ENCODE measurements at regions of chr3 and their contacts with region 1.

Region 1: DNA sequence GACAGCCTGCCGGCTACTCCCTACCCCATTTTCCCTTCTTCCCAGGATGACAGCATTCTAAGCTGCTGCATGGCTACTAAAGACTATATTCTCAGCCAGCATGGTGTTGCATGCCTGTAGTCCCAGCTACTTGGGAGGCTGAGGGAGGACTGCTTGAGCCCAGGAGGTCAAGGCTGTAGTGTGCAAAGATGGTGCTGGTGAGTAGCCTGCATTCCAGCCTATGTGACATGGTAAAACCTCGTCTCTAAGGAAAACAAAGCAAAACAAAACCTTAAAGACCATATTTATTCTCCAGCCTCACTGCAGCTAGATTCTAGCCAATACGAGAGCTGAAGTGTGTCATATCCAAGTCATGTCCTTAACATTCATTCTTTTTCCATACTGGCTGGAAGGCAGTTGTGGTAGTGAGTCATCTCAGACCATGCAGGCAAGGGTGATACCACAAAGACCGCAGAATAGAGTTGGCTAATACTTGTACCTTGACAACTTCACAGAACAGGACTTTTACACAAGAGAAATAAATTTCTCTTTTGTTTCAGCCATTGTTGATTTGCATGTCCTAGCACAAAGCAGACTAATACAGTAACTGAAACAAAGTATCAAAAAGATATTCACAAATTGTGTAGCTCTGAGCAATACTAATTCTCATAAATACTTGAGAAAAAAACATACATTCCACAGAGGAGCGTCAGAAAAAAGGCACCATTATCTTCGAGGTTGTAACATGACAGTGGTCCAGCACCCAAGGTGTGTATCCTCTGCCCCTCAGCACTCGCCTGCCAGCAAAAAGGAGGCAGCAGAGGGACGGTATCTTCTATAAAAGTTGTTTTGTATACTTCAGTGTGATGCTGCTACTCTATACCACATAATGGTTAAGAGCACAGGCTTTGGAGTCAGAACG is 14.8 kb downstream of the PBRM1 start:
- DNase-seq: peak in 4 of 14 experiments; percentile 12 to 72 (median 52)
- ATAC-seq: peak; percentile 66
- H3K4me3 ChIP-seq: no peak overlapping the region
- H3K4me3 Mint-ChIP-seq: no peak overlapping the region
- H3K27ac ChIP-seq: peak overlapping the region in 1 of 2 donors; percentile 9
- H3K27ac Mint-ChIP-seq: peak overlapping the region; percentile 71
- H3K4me1 ChIP-seq: peaks cover 9% of the 10 kb centered on the region
- H3K4me1 Mint-ChIP-seq: peaks cover 35% of the 10 kb centered on the region
- H3K27me3 ChIP-seq: no peaks in the 10 kb centered on the region
- H3K27me3 Mint-ChIP-seq: no peaks in the 10 kb centered on the region
- CTCF ChIP-seq: no peak

Region 2: DNA sequence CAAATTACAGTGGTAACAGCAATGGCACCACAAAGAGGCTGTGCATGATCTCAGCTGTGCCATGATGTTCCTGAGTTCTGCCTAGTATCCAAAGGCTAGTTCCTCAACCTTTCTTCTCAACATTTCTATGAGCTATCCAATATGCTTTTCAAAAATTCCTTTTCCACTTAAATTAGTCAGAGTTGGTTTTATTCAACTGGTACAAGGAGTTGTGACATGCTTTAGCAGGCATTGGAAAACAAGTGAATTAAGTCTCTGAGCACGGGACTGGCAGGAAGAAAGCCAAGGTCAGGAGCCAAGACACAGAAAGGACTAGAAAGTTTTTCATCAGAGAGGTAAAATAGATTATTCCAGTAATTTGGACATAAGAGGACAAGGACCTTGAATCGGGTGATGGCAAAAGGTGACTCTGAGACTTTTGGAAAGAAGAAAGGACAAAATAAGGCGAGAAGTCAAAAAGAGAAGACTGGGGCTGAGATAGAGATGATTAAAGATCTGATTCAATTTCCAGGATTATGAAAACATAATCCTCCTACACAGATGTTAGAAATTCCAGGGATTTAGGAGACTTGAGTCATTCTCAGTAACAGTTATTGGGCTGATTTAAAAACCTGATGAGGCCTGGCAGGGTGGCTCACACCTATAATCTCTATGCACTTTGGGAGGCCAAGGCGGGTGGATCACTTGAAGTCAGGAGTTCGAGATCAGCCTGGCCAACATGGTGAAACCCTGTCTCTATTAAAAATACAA is 21.2 kb before region 1 on chr3:
- CTCF ChIA-PET with region 1: no interaction called
- POLR2A ChIA-PET with region 1: no interaction called
- intact Hi-C with region 1: no loop called
- DNase-seq: no peak
- ATAC-seq: no peak
- H3K4me3 ChIP-seq: no peak overlapping the region
- H3K4me3 Mint-ChIP-seq: no peak overlapping the region
- H3K27ac ChIP-seq: no peak overlapping the region
- H3K27ac Mint-ChIP-seq: no peak overlapping the region
- H3K4me1 ChIP-seq: no peaks in the 10 kb centered on the region
- H3K4me1 Mint-ChIP-seq: no peaks in the 10 kb centered on the region
- H3K27me3 ChIP-seq: no peaks in the 10 kb centered on the region
- H3K27me3 Mint-ChIP-seq: no peaks in the 10 kb centered on the region
- CTCF ChIP-seq: no peak

Region 3: GRCh38 chr3:52742418-52743041 is 71.7 kb after region 1 on chr3:
- CTCF ChIA-PET with region 1: no interaction called
- POLR2A ChIA-PET with region 1: no interaction called
- intact Hi-C with region 1: loop called in 1 of 2 experiments (anchors 2 kb)
- DNase-seq: peak in 3 of 14 experiments; percentile 39 to 57 (median 54)
- ATAC-seq: peak; percentile 46
- H3K4me3 ChIP-seq: no peak overlapping the region
- H3K4me3 Mint-ChIP-seq: no peak overlapping the region
- H3K27ac ChIP-seq: no peak overlapping the region
- H3K27ac Mint-ChIP-seq: no peak overlapping the region
- H3K4me1 ChIP-seq: no peaks in the 10 kb centered on the region
- H3K4me1 Mint-ChIP-seq: no peaks in the 10 kb centered on the region
- H3K27me3 ChIP-seq: no peaks in the 10 kb centered on the region
- H3K27me3 Mint-ChIP-seq: no peaks in the 10 kb centered on the region
- CTCF ChIP-seq: peak; percentile 72

Region 4: GRCh38 chr3:52754373-52754772 is 83.5 kb after region 1 on chr3:
- CTCF ChIA-PET with region 1: no interaction called
- POLR2A ChIA-PET with region 1: no interaction called
- intact Hi-C with region 1: no loop called
- DNase-seq: no peak
- ATAC-seq: no peak
- H3K4me3 ChIP-seq: no peak overlapping the region
- H3K4me3 Mint-ChIP-seq: no peak overlapping the region
- H3K27ac ChIP-seq: no peak overlapping the region
- H3K27ac Mint-ChIP-seq: no peak overlapping the region
- H3K4me1 ChIP-seq: no peaks in the 10 kb centered on the region
- H3K4me1 Mint-ChIP-seq: no peaks in the 10 kb centered on the region
- H3K27me3 ChIP-seq: no peaks in the 10 kb centered on the region
- H3K27me3 Mint-ChIP-seq: no peaks in the 10 kb centered on the region
- CTCF ChIP-seq: no peak